Activated naive CD4-positive, alpha-beta T cell treated with anti-CD3 and anti-CD28 coated beads for 36 hours (primary cell): ENCODE measurements at regions of chr3 and their contacts with region 1.

Region 1: GRCh38 chr3:16511681-16512434 is 1.6 kb downstream of the RFTN1 start:
- DNase-seq: peak; percentile 95
- H3K4me3 Mint-ChIP-seq: peak overlapping the region; percentile 92
- H3K27ac Mint-ChIP-seq: peak overlapping the region; percentile 100
- H3K4me1 Mint-ChIP-seq: peaks cover 73% of the 10 kb centered on the region
- H3K27me3 Mint-ChIP-seq: no peaks in the 10 kb centered on the region

Region 2: GRCh38 chr3:15753056-15753710 is 758.7 kb before region 1 on chr3:
- CTCF ChIA-PET with region 1: no interaction called
- intact Hi-C with region 1: no loop called
- DNase-seq: no peak
- H3K4me3 Mint-ChIP-seq: no peak overlapping the region
- H3K27ac Mint-ChIP-seq: no peak overlapping the region
- H3K4me1 Mint-ChIP-seq: peaks cover 7% of the 10 kb centered on the region
- H3K27me3 Mint-ChIP-seq: no peaks in the 10 kb centered on the region

Region 3: DNA sequence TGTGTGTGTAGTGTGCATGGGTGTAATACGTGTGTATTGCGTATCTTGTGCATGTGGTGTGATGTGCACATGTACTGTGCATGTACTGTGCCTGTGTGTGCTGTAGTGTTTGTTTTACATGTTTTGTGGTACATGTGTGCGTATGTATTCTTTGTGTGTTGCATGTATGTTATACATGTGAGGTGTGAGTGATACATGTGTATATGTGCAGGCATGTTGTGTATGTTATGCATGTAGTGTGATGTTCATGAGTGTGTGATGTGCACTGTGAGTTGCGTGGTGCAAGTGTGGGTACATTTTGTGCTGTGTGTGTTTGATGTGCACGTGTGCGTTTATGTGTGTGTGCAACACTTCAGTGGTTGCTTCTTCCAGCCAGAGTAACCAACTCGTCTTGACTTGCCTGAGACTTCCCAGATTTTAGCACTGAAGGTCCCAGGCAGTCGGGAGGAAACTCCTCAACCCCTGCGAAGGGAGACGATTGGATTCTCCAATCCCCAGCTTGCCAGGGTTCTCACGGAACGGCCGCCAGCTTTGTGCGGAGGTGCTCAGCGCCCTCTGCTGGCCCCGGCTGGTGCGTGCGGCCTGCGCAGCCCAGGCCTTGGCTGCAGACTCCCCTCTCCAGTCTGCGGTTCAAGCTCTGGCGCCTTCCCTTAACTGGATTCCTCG is 333.8 kb before region 1 on chr3:
- CTCF ChIA-PET with region 1: no interaction called
- intact Hi-C with region 1: no loop called
- DNase-seq: peak; percentile 73
- H3K4me3 Mint-ChIP-seq: no peak overlapping the region
- H3K27ac Mint-ChIP-seq: no peak overlapping the region
- H3K4me1 Mint-ChIP-seq: peaks cover 2% of the 10 kb centered on the region
- H3K27me3 Mint-ChIP-seq: peaks cover 7% of the 10 kb centered on the region

Region 4: DNA sequence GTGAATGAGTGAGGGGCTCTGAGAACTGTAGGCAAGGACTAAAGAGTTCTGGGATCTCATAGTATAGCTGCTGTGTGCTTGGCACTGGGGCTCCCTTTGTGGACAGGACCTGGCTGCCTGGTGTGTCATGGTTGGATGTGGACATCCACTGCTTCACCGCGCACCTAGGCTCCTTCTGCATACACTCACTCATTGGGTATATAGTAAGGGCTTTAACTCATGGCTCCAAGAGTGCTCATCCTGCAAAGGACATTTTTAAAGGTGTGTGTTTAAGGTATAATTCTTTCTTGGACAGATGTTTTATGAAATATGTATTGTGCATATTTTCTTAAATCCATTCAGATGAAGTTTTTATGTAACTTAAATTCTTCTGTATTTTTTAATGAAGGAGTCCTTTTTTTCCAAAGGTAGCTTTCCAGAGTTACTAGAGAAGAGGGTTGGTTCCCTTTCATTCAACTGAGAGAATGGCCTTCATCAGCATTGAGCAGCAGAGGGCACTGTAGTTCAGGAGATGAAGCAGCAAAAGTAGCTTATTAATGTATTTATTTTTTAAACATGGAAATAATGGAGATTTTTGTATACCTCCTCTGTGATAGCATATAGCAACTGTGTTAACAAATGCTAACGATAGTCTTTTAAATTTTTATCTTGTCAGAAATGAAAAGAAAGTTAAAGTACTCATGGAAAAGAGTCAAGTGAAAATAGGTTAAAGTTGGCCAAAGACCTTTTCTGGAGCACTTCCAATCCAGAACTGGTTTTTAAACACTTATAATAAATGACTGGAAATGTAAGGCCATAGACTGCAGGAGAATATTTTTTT is 221.6 kb before region 1 on chr3:
- CTCF ChIA-PET with region 1: interaction called, 12 read pairs
- intact Hi-C with region 1: loop called (anchors 1 kb)
- DNase-seq: peak; percentile 81
- H3K4me3 Mint-ChIP-seq: peak overlapping the region; percentile 84
- H3K27ac Mint-ChIP-seq: peak overlapping the region; percentile 97
- H3K4me1 Mint-ChIP-seq: peaks cover 85% of the 10 kb centered on the region
- H3K27me3 Mint-ChIP-seq: no peaks in the 10 kb centered on the region

Region 5: GRCh38 chr3:16338999-16339398 is 172.9 kb before region 1 on chr3:
- CTCF ChIA-PET with region 1: no interaction called
- intact Hi-C with region 1: loop called (anchors 2 kb)
- DNase-seq: peak; percentile 36
- H3K4me3 Mint-ChIP-seq: no peak overlapping the region
- H3K27ac Mint-ChIP-seq: peak overlapping the region; percentile 73
- H3K4me1 Mint-ChIP-seq: peaks cover 67% of the 10 kb centered on the region
- H3K27me3 Mint-ChIP-seq: no peaks in the 10 kb centered on the region

Region 6: GRCh38 chr3:16482770-16483531 is 28.9 kb before region 1 on chr3:
- CTCF ChIA-PET with region 1: interaction called, 11 read pairs
- intact Hi-C with region 1: loop called (anchors 1 kb)
- DNase-seq: peak; percentile 62
- H3K4me3 Mint-ChIP-seq: peak overlapping the region; percentile 3
- H3K27ac Mint-ChIP-seq: peak overlapping the region; percentile 74
- H3K4me1 Mint-ChIP-seq: peaks cover 82% of the 10 kb centered on the region
- H3K27me3 Mint-ChIP-seq: no peaks in the 10 kb centered on the region

Region 7: GRCh38 chr3:16884084-16884747 is 372.4 kb after region 1 on chr3:
- CTCF ChIA-PET with region 1: no interaction called
- intact Hi-C with region 1: loop called (anchors 2 kb)
- DNase-seq: peak; percentile 80
- H3K4me3 Mint-ChIP-seq: peak overlapping the region; percentile 86
- H3K27ac Mint-ChIP-seq: peak overlapping the region; percentile 95
- H3K4me1 Mint-ChIP-seq: peaks cover 14% of the 10 kb centered on the region
- H3K27me3 Mint-ChIP-seq: no peaks in the 10 kb centered on the region